ENCODE measurements at regions of chr3 and their contacts with region 1.

Region 1: GRCh38 chr3:63349583-63350521 is 71.7 kb downstream of the SYNPR start:
- DNase-seq: peak; percentile 29 to 67 (median 51)
- H3K4me3 ChIP-seq: no peak overlapping the region
- H3K4me3 Mint-ChIP-seq: no peak overlapping the region
- H3K27ac ChIP-seq: no peak overlapping the region
- H3K27ac Mint-ChIP-seq: no peak overlapping the region
- H3K4me1 ChIP-seq: no peaks in the 10 kb centered on the region
- H3K4me1 Mint-ChIP-seq: no peaks in the 10 kb centered on the region
- H3K27me3 ChIP-seq: no peaks in the 10 kb centered on the region
- H3K27me3 Mint-ChIP-seq: peaks cover 3 to 11% (median 8%) of the 10 kb centered on the region in 3 donors
- CTCF ChIP-seq: peak; percentile 84

Region 2: GRCh38 chr3:63385629-63386028 is 35.8 kb after region 1 on chr3:
- intact Hi-C with region 1: no loop called
- DNase-seq: no peak
- H3K4me3 ChIP-seq: no peak overlapping the region
- H3K4me3 Mint-ChIP-seq: no peak overlapping the region
- H3K27ac ChIP-seq: no peak overlapping the region
- H3K27ac Mint-ChIP-seq: no peak overlapping the region
- H3K4me1 ChIP-seq: no peaks in the 10 kb centered on the region
- H3K4me1 Mint-ChIP-seq: no peaks in the 10 kb centered on the region
- H3K27me3 ChIP-seq: no peaks in the 10 kb centered on the region
- H3K27me3 Mint-ChIP-seq: peaks cover 0 to 3% (median 0%) of the 10 kb centered on the region in 3 donors
- CTCF ChIP-seq: no peak

Region 3: DNA sequence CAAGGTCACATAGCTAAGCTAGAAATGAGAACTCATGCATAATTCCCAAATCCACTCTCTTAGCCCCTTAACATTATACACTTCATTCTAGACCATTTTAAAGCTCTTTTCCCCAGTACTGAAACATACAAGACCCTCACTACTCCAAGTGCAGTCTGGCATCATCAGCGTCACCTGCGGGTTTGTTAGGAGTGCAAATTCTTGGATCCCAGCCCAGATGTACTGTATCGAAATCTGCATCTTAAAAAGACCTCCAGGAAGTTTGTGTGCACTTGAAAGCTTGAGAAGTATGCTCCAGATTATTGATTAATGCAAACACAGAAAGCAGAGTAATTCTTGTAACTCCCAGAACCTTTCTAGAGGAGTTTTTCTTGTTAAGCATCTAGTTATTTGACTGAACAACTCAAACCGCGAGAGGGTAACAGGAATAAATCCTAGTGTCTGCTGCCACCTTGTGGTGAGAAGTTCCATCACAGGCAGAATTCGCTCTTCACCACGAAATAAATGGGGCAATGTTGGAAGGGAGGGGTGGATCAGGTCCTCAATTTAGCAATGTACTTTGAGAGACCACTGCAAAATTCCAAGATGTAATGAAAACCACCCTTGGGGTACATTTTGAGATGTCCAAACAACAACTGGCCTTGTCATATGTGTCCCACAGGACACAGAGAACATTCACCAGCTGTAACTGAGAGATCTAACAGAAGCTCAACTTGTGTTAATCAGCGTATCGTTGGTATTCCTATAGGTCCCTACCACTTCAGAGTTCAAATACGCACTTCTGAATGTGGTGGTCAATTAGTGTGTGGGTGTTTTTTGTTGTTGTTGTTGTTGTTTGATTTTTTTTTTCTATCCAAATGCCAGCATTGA is 468.7 kb after region 1 on chr3:
- intact Hi-C with region 1: loop called (anchors 5 kb)
- DNase-seq: peak; percentile 44 to 72 (median 56)
- H3K4me3 ChIP-seq: no peak overlapping the region
- H3K4me3 Mint-ChIP-seq: no peak overlapping the region
- H3K27ac ChIP-seq: no peak overlapping the region
- H3K27ac Mint-ChIP-seq: no peak overlapping the region
- H3K4me1 ChIP-seq: no peaks in the 10 kb centered on the region
- H3K4me1 Mint-ChIP-seq: peaks cover 3% of the 10 kb centered on the region
- H3K27me3 ChIP-seq: no peaks in the 10 kb centered on the region
- H3K27me3 Mint-ChIP-seq: peaks cover 0 to 2% (median 0%) of the 10 kb centered on the region in 3 donors
- CTCF ChIP-seq: peak; percentile 85

Measured in CD14-positive monocyte (primary cell).